ENCODE measurements at regions of chr19 and their contacts with region 1.

Region 1: DNA sequence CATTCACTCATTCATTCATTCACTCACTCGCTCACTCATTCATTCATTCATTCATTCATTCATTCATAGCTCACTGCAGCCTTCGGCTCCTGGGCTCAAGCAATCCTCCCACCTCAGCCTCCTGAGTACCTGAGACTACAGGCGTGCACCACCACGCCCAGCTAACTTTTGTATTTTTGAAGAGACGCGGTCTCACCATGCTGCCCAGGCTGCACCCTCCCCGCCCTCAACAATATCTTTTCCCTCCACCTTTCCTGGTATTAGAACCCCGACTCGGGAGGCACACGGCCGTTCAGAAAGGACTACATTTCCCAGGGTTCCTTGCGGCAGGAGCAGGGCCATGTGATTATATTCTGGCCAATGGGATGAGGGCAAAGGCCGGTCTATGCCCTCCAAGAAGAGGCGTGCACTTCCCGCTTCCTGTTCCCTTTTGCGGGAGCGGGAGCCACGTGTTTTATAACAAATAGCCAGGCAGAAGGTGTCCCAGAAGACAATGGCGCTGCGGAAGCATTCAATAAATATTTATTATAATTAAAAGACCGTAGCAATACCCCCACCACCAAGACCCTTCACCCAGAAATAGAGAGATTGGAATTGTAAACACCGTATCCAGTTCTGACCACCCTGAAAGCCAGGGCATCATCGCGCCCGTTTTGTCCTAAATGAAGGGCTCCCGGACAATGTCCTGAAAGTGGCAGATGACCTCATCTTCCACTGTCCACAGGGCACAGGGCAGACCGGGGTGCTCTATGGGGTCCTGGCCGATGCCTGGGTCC is 15.9 kb downstream of the TICAM1 start:
- DNase-seq: peak; percentile 77
- H3K4me3 Mint-ChIP-seq: peak overlapping the region; percentile 44
- H3K27ac Mint-ChIP-seq: peak overlapping the region; percentile 70
- H3K4me1 Mint-ChIP-seq: peaks cover 33% of the 10 kb centered on the region
- H3K27me3 Mint-ChIP-seq: no peaks in the 10 kb centered on the region

Region 2: GRCh38 chr19:4803736-4804695 is 11.6 kb before region 1 on chr19:
- CTCF ChIA-PET with region 1: interaction called, 32 read pairs
- POLR2A ChIA-PET with region 1: no interaction called
- DNase-seq: peak; percentile 59
- H3K4me3 Mint-ChIP-seq: no peak overlapping the region
- H3K27ac Mint-ChIP-seq: no peak overlapping the region
- H3K4me1 Mint-ChIP-seq: no peaks in the 10 kb centered on the region
- H3K27me3 Mint-ChIP-seq: no peaks in the 10 kb centered on the region

Region 3: GRCh38 chr19:4844348-4845179 is 28.9 kb after region 1 on chr19:
- CTCF ChIA-PET with region 1: interaction called, 264 read pairs
- POLR2A ChIA-PET with region 1: no interaction called
- DNase-seq: no peak
- H3K4me3 Mint-ChIP-seq: no peak overlapping the region
- H3K27ac Mint-ChIP-seq: no peak overlapping the region
- H3K4me1 Mint-ChIP-seq: peaks cover 18% of the 10 kb centered on the region
- H3K27me3 Mint-ChIP-seq: no peaks in the 10 kb centered on the region

Region 4: DNA sequence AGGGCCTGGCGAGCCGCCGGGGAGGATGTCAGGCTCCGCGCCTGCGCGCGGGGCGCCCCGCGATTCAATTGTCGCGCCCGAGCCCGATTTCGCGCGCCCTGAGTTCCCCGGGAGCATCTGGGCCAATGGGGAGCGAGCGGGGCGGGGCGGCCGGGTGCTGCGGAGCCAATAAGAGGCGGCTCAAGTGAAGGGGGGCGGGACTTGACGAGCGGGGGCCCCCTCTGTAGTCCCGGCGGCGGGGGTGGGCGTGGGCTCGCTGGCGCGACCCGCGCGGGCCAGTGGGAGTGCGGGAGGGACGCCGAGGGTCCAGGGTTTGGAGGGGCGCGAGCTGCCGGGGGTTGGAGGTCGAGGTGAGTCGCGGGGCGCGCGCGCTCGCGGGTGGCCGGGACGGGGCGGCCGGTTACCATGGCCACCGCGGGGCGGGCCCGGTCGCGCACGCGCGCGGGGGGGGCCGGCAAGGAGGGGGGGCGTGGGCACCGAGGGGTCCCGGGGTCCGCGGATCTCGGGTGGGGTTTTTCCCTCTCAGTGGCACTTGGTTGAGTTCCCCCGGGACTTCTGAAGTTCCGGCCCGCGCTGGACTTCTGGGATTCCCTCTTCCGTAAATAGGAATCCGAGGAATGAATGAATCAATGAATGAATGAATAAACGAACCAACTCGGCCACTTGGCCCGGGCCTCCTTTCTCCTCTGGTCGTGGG is 94.4 kb after region 1 on chr19:
- CTCF ChIA-PET with region 1: interaction called, 76 read pairs
- POLR2A ChIA-PET with region 1: interaction called, 17 read pairs
- DNase-seq: peak; percentile 96
- H3K4me3 Mint-ChIP-seq: peak overlapping the region; percentile 83
- H3K27ac Mint-ChIP-seq: peak overlapping the region; percentile 90
- H3K4me1 Mint-ChIP-seq: peaks cover 45% of the 10 kb centered on the region
- H3K27me3 Mint-ChIP-seq: no peaks in the 10 kb centered on the region